WTC11 (cell line): ENCODE measurements at regions of chr11 and their contacts with region 1.

Region 1: GRCh38 chr11:4626207-4627099 is 10.8 kb upstream of the OR51D1 start:
- DNase-seq: peak; percentile 82
- ATAC-seq: peak; percentile 95
- H3K4me3 Mint-ChIP-seq: peak overlapping the region; percentile 12
- H3K27ac Mint-ChIP-seq: no peak overlapping the region
- H3K4me1 Mint-ChIP-seq: peaks cover 28% of the 10 kb centered on the region
- H3K27me3 Mint-ChIP-seq: peaks cover 2% of the 10 kb centered on the region; the same call in 1 of the 2 replicates
- CTCF ChIP-seq: peak; percentile 87

Region 2: DNA sequence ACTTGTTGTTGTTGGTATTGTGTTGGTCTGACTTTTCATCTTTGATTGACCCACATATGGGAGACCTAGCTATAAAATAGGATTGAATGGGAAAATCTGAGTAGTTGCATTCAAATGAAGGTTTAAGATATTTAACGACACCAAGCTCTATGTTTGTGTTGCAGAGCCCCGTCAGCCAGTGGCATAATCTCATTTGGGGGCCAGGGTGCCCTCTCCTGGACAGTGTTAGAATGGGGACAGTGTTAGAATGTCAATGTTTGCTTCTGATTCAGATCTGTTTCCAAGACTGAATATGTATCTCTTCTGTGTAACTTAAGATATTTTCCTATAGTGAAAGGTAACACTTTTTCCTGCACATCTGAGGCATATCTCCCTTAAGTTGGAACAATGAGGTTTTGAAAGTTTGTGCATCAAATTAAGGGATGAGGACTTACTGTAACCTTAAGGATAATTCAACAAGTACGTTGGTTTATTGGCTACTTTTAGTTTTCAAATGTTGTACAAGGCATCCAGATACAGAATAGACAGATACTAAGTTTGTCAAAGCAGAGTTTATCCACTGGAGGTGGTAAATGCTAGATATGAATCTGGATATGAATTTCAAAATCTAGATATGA is 86.7 kb before region 1 on chr11:
- CTCF ChIA-PET with region 1: no interaction called
- POLR2A ChIA-PET with region 1: no interaction called
- DNase-seq: peak; percentile 66
- ATAC-seq: peak; percentile 89
- H3K4me3 Mint-ChIP-seq: no peak overlapping the region
- H3K27ac Mint-ChIP-seq: no peak overlapping the region
- H3K4me1 Mint-ChIP-seq: no peaks in the 10 kb centered on the region
- H3K27me3 Mint-ChIP-seq: peaks cover 9% of the 10 kb centered on the region
- CTCF ChIP-seq: peak; percentile 47

Region 3: DNA sequence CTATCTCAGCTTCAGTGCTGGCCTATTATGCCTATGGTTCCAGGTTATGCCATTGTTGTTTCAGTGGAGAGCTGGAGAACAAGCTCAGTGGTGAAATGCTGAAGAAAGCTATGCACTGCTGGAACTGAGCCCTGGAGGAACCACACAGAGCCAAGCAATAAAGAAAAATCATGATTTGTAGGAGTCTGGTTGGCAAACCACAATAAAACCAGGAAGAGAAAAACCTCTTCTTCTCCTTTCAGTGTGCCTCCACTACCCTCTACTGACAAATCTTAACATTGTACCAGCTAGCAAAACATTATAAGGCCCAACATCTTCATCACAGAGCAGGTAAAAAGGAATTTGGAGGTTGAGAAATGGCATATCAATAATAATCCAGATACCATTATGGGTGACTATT is 200.0 kb after region 1 on chr11:
- CTCF ChIA-PET with region 1: interaction called, 13 read pairs
- POLR2A ChIA-PET with region 1: no interaction called
- DNase-seq: no peak
- ATAC-seq: peak; percentile 61
- H3K4me3 Mint-ChIP-seq: no peak overlapping the region
- H3K27ac Mint-ChIP-seq: no peak overlapping the region
- H3K4me1 Mint-ChIP-seq: peaks cover 6% of the 10 kb centered on the region; the same call in 1 of the 2 replicates
- H3K27me3 Mint-ChIP-seq: no peaks in the 10 kb centered on the region; the same call in 1 of the 2 replicates
- CTCF ChIP-seq: 0 out of 2 replicates have a peak, but pooled peaks have one; percentile 17